ENCODE measurements at regions of chr6 and their contacts with region 1.

Region 1: DNA sequence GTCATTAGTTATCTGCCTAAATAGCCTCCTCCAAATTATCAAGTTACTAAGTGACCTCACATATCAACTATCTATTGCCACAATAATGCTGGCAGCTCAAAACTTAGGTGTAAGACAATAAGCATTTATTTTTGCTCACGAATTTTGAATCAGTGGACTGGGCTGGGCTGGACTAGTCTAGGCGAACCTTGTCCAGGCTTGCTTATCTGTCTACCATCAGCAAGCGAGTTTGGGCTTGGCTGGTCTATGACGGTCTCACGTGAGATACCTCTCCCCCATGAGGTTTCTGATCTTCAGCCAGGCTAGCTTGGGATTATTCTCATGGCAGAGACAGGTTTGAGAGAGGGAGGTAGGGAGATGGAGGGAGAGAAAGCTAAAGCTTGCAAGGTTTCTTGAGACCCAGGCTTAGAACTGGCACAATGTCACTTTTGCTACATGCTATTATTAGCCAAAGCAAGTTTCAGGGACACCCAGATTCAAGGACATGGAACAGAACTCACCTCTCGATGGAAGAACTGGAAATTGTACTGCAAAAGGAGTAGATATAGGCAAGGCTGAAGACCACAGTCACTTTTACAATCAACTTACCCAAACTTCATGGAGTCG is 80.9 kb downstream of the WASF1 start:
- DNase-seq: no peak
- H3K4me3 ChIP-seq: no peak overlapping the region
- H3K27ac ChIP-seq: no peak overlapping the region
- H3K4me1 ChIP-seq: peaks cover 17% of the 10 kb centered on the region
- H3K27me3 ChIP-seq: no peaks in the 10 kb centered on the region
- CTCF ChIP-seq: no peak
- POLR2A ChIP-seq: no peak

Region 2: GRCh38 chr6:110075406-110075805 is 23.2 kb before region 1 on chr6:
- intact Hi-C with region 1: loop called (anchors 1 kb)
- DNase-seq: no peak
- H3K4me3 ChIP-seq: no peak overlapping the region
- H3K27ac ChIP-seq: no peak overlapping the region
- H3K4me1 ChIP-seq: no peaks in the 10 kb centered on the region
- H3K27me3 ChIP-seq: no peaks in the 10 kb centered on the region
- CTCF ChIP-seq: no peak
- POLR2A ChIP-seq: no peak

Region 3: GRCh38 chr6:110255211-110255755 is 156.7 kb after region 1 on chr6:
- intact Hi-C with region 1: no loop called
- DNase-seq: no peak
- H3K4me3 ChIP-seq: no peak overlapping the region
- H3K27ac ChIP-seq: no peak overlapping the region
- H3K4me1 ChIP-seq: no peaks in the 10 kb centered on the region
- H3K27me3 ChIP-seq: no peaks in the 10 kb centered on the region
- CTCF ChIP-seq: no peak
- POLR2A ChIP-seq: no peak

Region 4: GRCh38 chr6:111978532-111979149 is 1880.0 kb after region 1 on chr6:
- intact Hi-C with region 1: loop called (anchors 5 kb)
- DNase-seq: no peak
- H3K4me3 ChIP-seq: no peak overlapping the region
- H3K27ac ChIP-seq: no peak overlapping the region
- H3K4me1 ChIP-seq: peaks cover 9% of the 10 kb centered on the region
- H3K27me3 ChIP-seq: no peaks in the 10 kb centered on the region
- CTCF ChIP-seq: no peak
- POLR2A ChIP-seq: no peak

Measured in vagina (tissue), 2 donors.